IMR-90 (cell line): ENCODE measurements at regions of chr2 and their contacts with region 1.

Region 1: GRCh38 chr2:33210626-33211025 is 263.9 kb downstream of the LTBP1 start:
- DNase-seq: peak; percentile 99
- ATAC-seq: peak; percentile 71
- H3K4me3 ChIP-seq: no peak overlapping the region
- H3K27ac ChIP-seq: peak overlapping the region; percentile 92; the same call in 1 of the 2 replicates
- H3K4me1 ChIP-seq: peaks cover 36% of the 10 kb centered on the region
- H3K27me3 ChIP-seq: no peaks in the 10 kb centered on the region
- CTCF ChIP-seq: no peak
- POLR2A ChIP-seq: 0 out of 2 replicates have a peak, but pooled peaks have one; percentile 32
- RAD21 ChIP-seq: peak; percentile 33

Region 2: DNA sequence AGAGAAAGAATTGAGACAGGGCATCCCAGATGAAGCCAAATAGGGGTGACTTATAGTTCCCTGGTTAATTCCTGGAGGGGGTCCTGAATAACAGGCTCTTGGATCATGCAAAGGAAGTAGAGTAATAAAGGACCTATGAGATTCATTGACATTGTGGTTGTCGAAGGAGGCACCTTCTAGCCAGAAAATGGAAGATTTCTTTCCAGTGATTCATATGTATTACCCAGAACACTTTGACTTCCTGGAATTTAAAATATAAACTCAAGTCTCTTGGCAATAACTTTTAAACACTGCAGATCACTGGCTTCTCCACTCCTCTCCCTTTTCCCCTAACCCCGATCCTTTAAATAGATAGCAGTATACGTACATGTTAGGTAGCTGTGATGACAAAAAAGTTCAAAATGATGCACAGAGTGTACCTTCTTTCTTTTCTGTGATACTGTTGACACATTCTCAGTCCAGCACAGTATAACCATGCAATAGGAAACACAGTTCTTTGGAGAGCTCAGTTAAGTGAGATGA is 52.1 kb before region 1 on chr2:
- CTCF ChIA-PET with region 1: no interaction called
- POLR2A ChIA-PET with region 1: no interaction called
- dilution Hi-C with region 1: no loop called
- in situ Hi-C with region 1: no loop called
- intact Hi-C with region 1: loop called (anchors 2 kb)
- DNase-seq: peak; percentile 95
- ATAC-seq: peak; percentile 89
- H3K4me3 ChIP-seq: no peak overlapping the region
- H3K27ac ChIP-seq: peak overlapping the region; percentile 100
- H3K4me1 ChIP-seq: peaks cover 26% of the 10 kb centered on the region
- H3K27me3 ChIP-seq: no peaks in the 10 kb centered on the region
- CTCF ChIP-seq: no peak
- POLR2A ChIP-seq: peak; percentile 38; the same call in 1 of the 2 replicates
- RAD21 ChIP-seq: 0 out of 2 replicates have a peak, but pooled peaks have one; percentile 1

Region 3: DNA sequence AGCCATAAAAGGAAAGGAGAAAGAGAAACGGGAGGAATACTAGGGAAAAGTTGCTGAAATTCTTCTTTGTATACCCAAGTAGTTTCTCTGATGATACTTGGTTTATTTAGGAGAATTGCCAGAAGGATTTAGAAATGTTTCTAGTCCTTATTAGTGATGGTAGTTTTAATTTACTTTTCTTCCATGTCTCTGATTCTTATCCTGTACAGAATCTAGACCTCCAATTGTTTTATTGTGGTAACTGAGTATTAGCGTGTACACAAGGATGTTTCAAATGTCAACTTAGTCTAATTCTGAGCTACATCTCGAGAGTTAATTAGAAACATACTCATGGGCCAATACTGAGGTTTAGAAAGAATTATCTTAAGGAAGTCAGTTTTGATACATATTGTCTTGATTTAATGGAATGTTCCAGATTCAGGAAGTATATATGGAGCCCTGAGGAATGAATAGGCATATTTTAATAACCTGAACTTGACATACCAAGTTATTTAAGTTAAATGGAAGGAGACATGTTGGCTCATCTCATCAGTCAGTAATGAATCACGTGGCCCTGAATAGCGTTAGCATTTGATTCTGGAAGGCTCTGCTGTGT is 44.2 kb before region 1 on chr2:
- CTCF ChIA-PET with region 1: no interaction called
- POLR2A ChIA-PET with region 1: no interaction called
- dilution Hi-C with region 1: no loop called
- in situ Hi-C with region 1: no loop called
- intact Hi-C with region 1: loop called (anchors 2 kb)
- DNase-seq: peak; percentile 73
- ATAC-seq: peak; percentile 52
- H3K4me3 ChIP-seq: no peak overlapping the region
- H3K27ac ChIP-seq: peak overlapping the region; percentile 50; the same call in 1 of the 2 replicates
- H3K4me1 ChIP-seq: peaks cover 18% of the 10 kb centered on the region
- H3K27me3 ChIP-seq: no peaks in the 10 kb centered on the region
- CTCF ChIP-seq: no peak
- POLR2A ChIP-seq: no peak
- RAD21 ChIP-seq: no peak

Region 4: DNA sequence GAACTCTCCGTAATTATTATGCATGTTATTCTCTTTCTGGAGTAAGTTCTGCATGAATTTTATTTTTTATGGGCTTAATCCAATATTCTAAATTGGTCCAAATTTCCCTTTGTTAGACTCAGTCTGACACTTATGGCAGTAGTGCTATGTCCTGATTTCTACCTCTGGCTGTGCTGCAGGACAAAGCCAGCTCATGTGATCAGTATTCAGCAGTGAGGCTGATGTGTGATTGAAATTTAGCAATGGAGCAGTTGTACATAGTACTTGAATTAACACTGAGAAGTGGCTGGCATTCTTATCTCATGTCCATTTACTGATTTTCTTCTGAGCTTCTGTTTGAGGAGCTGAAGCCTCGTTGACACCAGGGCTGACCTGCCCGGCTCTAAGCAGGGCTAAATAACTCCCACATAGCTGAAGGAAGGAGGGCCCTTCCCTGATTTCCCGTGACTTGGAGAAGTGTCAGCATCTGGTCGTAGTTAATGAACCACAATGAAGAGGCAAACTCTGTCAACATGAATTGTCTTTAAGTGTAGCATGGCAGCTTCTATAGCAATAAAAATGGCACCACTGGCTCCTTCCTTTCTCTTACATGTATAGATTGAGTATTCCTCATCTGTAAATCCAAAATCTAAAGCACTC is 106.9 kb after region 1 on chr2:
- CTCF ChIA-PET with region 1: no interaction called
- POLR2A ChIA-PET with region 1: no interaction called
- dilution Hi-C with region 1: no loop called
- in situ Hi-C with region 1: no loop called
- intact Hi-C with region 1: no loop called
- DNase-seq: no peak
- ATAC-seq: no peak
- H3K4me3 ChIP-seq: no peak overlapping the region
- H3K27ac ChIP-seq: no peak overlapping the region; the same call in 1 of the 2 replicates
- H3K4me1 ChIP-seq: peaks cover 17% of the 10 kb centered on the region
- H3K27me3 ChIP-seq: no peaks in the 10 kb centered on the region
- CTCF ChIP-seq: no peak
- POLR2A ChIP-seq: no peak
- RAD21 ChIP-seq: no peak

Region 5: DNA sequence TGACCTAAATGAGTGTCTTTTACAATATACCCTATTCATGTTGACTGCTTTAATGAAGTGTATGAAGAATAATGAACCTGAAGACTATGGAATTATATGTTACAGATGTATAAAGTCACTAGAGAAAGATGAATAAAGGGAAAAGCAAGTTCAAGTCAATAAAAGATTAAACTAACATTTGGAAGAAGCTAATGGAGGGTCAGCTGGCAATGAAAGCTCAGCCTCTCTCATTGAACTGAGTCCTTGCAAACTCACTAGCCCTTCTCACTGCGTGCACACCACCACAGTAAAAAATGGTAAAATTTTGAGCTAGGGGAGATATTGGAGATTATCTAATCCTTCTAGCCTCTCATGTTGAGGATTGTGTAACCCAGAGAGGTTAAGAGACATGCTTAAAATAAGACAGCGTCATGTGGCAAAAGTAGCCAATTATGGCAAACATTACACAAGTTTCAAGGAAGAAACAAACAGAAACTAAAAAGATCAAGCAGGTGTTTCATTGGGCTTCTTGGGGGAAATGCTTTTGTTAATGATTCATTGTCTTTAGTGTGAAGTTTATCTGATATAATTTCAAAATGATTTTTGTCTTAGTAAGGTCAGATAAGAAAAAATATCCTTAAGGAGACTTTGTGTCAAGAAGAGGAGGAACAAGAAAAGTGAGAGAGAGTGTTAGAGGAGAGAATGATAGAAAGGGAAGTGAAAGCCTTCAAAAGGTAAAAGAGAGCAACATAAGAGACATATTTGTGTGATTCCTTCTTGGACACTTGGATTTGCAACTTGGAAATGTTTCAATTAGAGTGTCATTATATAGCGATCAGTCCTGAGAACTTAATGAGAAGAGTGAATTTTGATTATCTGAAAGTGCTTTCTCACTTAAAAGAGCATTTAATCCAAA is 1282.2 kb after region 1 on chr2:
- CTCF ChIA-PET with region 1: no interaction called
- POLR2A ChIA-PET with region 1: no interaction called
- dilution Hi-C with region 1: no loop called
- in situ Hi-C with region 1: no loop called
- intact Hi-C with region 1: no loop called
- DNase-seq: no peak
- ATAC-seq: no peak
- H3K4me3 ChIP-seq: no peak overlapping the region
- H3K27ac ChIP-seq: no peak overlapping the region
- H3K4me1 ChIP-seq: no peaks in the 10 kb centered on the region
- H3K27me3 ChIP-seq: no peaks in the 10 kb centered on the region
- CTCF ChIP-seq: no peak
- POLR2A ChIP-seq: no peak
- RAD21 ChIP-seq: no peak